Heart right ventricle (tissue), 16 donors: ENCODE measurements at regions of chr6 and their contacts with region 1.

Region 1: DNA sequence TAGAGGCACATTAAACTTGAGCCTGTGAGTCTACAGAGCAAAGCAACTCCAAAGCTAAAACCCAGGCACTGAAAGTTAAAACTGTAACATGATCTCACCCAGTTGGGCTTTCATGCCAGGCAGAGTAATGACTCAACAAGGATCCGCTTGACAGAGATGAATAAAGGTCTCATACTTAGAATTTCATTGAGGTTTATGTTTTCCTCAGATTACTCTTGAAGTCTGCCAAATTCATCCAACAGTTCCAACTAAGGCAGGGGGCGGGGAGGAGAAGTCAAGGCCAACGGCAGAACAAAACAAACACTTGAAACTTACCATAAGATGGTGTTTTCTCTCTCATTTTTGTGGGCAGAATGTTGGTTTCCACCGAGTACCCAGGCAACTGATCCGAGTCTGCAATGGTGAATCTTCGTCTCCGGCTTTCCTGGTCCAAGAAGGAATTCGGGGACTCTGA is 54.0 kb upstream of the IPCEF1 start:
- DNase-seq: peak in 1 of 2 donors; percentile 60
- ATAC-seq: peak; percentile 85 to 96 (median 92)
- H3K4me3 ChIP-seq: no peak overlapping the region
- H3K27ac ChIP-seq: peak overlapping the region in 9 of 10 donors; percentile 61 to 92 (median 88)
- H3K4me1 ChIP-seq: peaks cover 7 to 45% (median 26%) of the 10 kb centered on the region in 9 donors
- H3K27me3 ChIP-seq: no peaks in the 10 kb centered on the region
- CTCF ChIP-seq: no peak

Region 2: GRCh38 chr6:154289863-154290508 is 120.7 kb before region 1 on chr6:
- intact Hi-C with region 1: loop called in 1 of 10 experiments (anchors 10 kb)
- DNase-seq: no peak
- ATAC-seq: no peak
- H3K4me3 ChIP-seq: no peak overlapping the region
- H3K27ac ChIP-seq: no peak overlapping the region
- H3K4me1 ChIP-seq: peaks cover 0 to 8% (median 0%) of the 10 kb centered on the region in 9 donors
- H3K27me3 ChIP-seq: no peaks in the 10 kb centered on the region
- CTCF ChIP-seq: no peak

Region 3: GRCh38 chr6:154615483-154616025 is 204.9 kb after region 1 on chr6:
- intact Hi-C with region 1: loop called in 1 of 10 experiments (anchors 10 kb)
- DNase-seq: peak; percentile 61 to 65
- ATAC-seq: peak; percentile 71 to 90 (median 84)
- H3K4me3 ChIP-seq: peak overlapping the region in 1 of 10 donors; percentile 10
- H3K27ac ChIP-seq: no peak overlapping the region
- H3K4me1 ChIP-seq: peaks cover 0 to 18% (median 4%) of the 10 kb centered on the region in 9 donors
- H3K27me3 ChIP-seq: no peaks in the 10 kb centered on the region
- CTCF ChIP-seq: peak in 5 of 9 donors; percentile 13 to 46 (median 42)